Activated naive CD4-positive, alpha-beta T cell treated with anti-CD3 and anti-CD28 coated beads for 36 hours (primary cell): ENCODE measurements at regions of chr6 and their contacts with region 1.

Region 1: DNA sequence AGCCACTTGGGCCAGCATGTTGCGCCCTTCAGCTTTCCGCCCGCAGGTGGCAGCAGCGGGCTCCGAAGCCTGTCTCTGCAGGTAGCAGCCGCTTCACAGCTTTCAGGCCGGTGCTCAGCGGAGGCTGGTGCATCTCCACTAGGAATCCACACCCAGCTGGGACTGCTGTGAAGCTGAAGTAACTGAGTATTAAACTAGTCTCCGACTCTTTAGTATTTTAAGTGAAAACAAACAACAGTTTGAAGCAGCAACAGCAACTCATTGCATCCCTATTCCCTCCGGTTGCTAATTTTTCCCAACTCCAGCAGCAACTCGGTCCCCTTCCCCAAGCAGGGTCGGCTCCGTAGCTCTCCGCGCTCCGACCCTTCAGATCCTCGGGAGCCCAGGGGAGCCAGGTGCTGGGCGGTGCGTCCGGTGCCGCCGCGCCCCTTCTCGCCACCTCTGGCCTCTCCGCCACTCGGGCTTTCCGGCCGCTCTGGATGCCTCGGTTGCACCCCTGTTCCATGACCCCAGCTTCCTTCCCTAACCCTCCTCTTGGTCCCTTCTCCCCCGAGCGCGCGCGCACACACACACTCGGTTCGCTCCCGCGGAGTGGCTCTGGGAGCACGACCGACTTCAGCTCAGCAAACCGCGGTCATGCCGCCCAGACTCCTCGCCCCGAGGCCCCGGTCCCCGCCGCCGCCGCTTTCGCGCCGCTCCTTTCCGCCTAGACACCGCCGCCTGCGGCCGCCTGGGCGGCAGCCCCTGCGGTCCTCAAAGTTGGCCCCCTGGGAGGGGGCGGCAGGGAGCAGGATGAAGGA is 768 bp upstream of the NKAIN2 start:
- DNase-seq: peak; percentile 78
- H3K4me3 Mint-ChIP-seq: peak overlapping the region; percentile 51
- H3K27ac Mint-ChIP-seq: no peak overlapping the region
- H3K4me1 Mint-ChIP-seq: peaks cover 12% of the 10 kb centered on the region
- H3K27me3 Mint-ChIP-seq: peaks cover 43% of the 10 kb centered on the region

Region 2: GRCh38 chr6:124795643-124796463 is 993.0 kb after region 1 on chr6:
- CTCF ChIA-PET with region 1: no interaction called
- intact Hi-C with region 1: loop called (anchors 2 kb)
- DNase-seq: peak; percentile 5
- H3K4me3 Mint-ChIP-seq: no peak overlapping the region
- H3K27ac Mint-ChIP-seq: no peak overlapping the region
- H3K4me1 Mint-ChIP-seq: no peaks in the 10 kb centered on the region
- H3K27me3 Mint-ChIP-seq: peaks cover 4% of the 10 kb centered on the region

Region 3: DNA sequence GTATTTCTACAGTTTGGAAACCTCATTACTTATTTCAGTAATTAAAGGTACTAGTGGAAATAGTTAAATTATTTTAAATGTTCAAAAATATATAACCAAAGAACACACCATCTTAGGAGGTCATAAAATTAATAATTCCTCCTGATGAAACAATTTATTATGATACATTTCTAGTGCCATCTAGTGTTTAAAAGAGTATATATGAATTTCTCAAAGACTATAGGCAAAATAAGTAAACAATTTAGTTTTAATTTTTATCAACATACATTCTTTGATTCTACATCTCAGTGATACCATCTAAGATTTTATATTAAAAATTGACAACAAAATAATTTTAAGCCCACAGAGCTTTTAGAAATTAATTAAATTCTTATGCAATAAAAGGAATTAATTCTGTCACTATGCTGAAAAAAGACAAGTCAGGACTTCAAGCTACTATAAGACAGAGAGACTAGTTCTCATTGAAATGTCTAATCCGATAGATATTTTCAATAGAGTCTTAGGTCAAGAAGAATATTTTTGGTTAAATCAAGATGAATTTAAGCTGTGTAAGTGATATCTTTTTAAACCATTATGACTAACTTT is 1051.5 kb after region 1 on chr6:
- CTCF ChIA-PET with region 1: interaction called, 6 read pairs
- intact Hi-C with region 1: loop called (anchors 1 kb)
- DNase-seq: no peak
- H3K4me3 Mint-ChIP-seq: no peak overlapping the region
- H3K27ac Mint-ChIP-seq: no peak overlapping the region
- H3K4me1 Mint-ChIP-seq: no peaks in the 10 kb centered on the region
- H3K27me3 Mint-ChIP-seq: peaks cover 3% of the 10 kb centered on the region

Region 4: DNA sequence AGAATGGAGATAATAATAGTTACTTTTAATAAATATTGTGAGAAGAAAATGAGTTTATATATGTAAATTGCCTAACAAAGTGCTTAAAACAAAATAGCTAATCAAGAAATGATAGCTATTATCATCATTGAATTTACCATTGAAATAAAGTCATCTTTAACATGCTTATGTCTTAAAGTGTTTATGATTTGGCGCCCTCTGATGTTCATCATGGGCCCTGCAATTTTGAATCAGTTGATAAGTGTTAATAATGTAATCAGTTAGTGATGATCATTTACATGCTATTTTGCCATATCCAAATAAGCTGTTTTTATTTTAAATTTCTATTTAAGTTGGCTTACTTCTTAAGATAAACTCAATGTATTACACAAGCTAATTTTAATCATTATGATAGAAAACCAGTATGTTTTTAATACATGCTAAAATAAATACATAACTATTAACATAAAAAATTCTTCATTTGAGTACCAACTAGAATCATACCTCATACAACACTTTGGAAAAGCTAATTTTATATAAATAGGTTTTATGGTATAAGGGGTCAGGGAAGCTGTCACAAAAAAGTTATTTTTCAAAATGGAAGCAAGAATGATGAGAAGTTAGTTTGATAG is 1311.5 kb after region 1 on chr6:
- CTCF ChIA-PET with region 1: no interaction called
- intact Hi-C with region 1: loop called (anchors 1 kb)
- DNase-seq: peak; percentile 76
- H3K4me3 Mint-ChIP-seq: no peak overlapping the region
- H3K27ac Mint-ChIP-seq: no peak overlapping the region
- H3K4me1 Mint-ChIP-seq: no peaks in the 10 kb centered on the region
- H3K27me3 Mint-ChIP-seq: no peaks in the 10 kb centered on the region